Activated CD4-positive, alpha-beta T cell treated with anti-CD3 and anti-CD28 coated beads, Interleukin-2, amount 10 ng/mL, durations not matched to agents 24 days and 14 days (primary cell): ENCODE measurements at regions of chr14 and their contacts with region 1.

Region 1: GRCh38 chr14:39102969-39103957 is at the start of gene SEC23A:
- DNase-seq: peak; percentile 96
- H3K4me3 Mint-ChIP-seq: peak within 1 kb of the TSS; percentile 98
- H3K27ac Mint-ChIP-seq: peak within 1 kb of the TSS; percentile 99
- H3K4me1 Mint-ChIP-seq: peaks cover 32% of the 10 kb centered on the region
- H3K27me3 Mint-ChIP-seq: no peaks in the 10 kb centered on the region
- total RNA-seq, gene SEC23A: 63.5 and 65.8 TPM in 2 replicates

Region 2: DNA sequence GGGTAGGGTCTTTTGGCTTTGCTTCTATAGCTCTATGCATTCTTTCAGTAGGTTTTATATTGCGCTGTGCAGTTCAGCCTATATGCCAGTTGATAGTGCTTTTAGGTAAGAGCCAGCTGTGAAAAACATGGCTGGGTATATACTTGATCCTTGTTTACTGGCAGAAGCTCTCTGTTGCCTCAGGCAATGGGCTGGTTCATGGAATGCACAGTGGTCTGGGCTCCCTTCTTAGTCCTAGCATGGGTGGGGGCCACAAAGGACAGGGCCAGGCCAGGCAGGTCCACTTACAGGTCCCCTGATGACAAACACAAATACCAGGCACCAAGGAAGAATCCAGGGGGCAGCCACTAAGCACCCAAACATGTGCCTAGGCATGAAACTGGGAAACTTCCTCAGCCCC is 240.9 kb before region 1 on chr14:
- intact Hi-C with region 1: no loop called
- DNase-seq: no peak
- H3K4me3 Mint-ChIP-seq: no peak overlapping the region
- H3K27ac Mint-ChIP-seq: no peak overlapping the region
- H3K4me1 Mint-ChIP-seq: no peaks in the 10 kb centered on the region
- H3K27me3 Mint-ChIP-seq: peaks cover 2% of the 10 kb centered on the region

Region 3: DNA sequence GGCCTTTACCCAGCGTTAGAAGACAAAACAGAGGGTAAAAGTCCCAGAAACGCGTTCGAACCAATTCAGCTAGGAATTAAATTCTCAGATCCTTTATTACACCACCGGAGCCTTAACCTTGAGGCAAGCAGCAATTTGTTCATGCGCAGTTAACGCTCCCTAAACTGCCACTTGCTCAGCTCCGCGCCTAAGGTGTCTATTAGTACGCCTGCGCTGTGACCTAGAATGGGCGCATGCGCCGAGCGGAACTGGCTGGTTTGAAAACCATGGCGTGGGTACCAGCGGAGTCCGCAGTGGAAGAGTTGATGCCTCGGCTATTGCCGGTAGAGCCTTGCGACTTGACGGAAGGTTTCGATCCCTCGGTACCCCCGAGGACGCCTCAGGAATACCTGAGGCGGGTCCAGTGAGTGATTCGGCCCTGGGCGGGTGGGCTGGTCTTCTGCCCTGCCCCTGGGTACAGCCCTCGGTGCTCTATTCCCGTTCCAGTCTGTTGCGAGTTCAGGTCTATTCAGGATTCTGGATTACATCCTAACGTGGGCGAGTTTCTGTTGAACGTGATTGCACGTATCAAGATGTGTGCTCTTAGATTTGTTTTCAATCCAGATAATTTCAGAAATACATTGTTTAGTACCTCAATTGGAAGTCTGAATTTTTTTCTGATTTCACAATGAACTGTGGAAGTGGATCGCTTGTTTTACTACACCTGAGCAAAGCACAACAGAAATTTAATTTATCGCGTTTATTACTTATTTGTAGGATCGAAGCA is 11.0 kb after region 1 on chr14 and contains the start of gene GEMIN2:
- intact Hi-C with region 1: loop called (anchors 1 kb)
- DNase-seq: peak; percentile 98
- H3K4me3 Mint-ChIP-seq: peak within 1 kb of the TSS; percentile 98
- H3K27ac Mint-ChIP-seq: peak within 1 kb of the TSS; percentile 97
- H3K4me1 Mint-ChIP-seq: peaks cover 18% of the 10 kb centered on the region
- H3K27me3 Mint-ChIP-seq: no peaks in the 10 kb centered on the region
- total RNA-seq, gene GEMIN2: 23.1 and 24.9 TPM in 2 replicates

Region 4: GRCh38 chr14:39229222-39229543 is 125.9 kb after region 1 on chr14:
- intact Hi-C with region 1: loop called (anchors 2 kb)
- DNase-seq: peak; percentile 91
- H3K4me3 Mint-ChIP-seq: peak overlapping the region; percentile 54
- H3K27ac Mint-ChIP-seq: peak overlapping the region; percentile 90
- H3K4me1 Mint-ChIP-seq: peaks cover 38% of the 10 kb centered on the region
- H3K27me3 Mint-ChIP-seq: no peaks in the 10 kb centered on the region

Region 5: DNA sequence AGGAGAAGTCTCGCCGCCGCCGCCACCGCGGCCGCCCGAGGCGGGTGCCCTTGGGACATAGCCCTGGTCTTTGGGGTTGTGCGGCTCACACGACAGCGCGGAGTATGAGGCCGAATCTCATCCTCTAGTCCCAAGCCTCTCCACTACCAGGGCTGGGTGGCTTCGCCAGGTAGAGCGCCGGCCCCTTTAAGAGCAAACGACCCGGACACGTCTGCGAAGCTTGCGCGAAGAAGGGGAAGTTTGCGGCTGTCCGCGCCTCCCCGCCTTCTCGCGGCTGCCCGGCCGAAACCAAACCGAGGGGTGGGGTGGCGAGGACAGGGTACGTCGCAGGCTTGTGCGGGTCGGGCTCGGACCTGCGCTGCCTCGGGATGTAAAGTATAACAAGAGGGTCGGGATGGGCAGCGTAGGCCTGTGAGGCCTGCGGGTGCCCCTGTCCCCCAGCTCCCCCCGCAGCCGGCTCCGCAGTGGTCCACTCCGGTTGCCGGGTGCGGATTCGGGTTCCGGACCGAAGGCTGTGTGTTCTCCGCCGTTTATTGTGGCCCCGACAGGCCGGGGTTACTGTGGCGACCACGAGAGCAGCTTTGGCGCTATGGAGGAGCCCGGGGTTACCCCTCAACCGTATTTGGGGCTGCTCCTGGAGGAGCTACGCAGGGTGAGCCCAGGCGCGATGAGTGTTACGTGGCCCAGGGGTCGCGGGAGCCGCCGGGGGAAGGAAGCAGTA is 163.8 kb after region 1 on chr14:
- intact Hi-C with region 1: loop called (anchors 2 kb)
- DNase-seq: peak; percentile 94
- H3K4me3 Mint-ChIP-seq: peak overlapping the region; percentile 82
- H3K27ac Mint-ChIP-seq: peak overlapping the region; percentile 81
- H3K4me1 Mint-ChIP-seq: peaks cover 39% of the 10 kb centered on the region
- H3K27me3 Mint-ChIP-seq: no peaks in the 10 kb centered on the region

Region 6: GRCh38 chr14:39368261-39368959 is 265.1 kb after region 1 on chr14:
- intact Hi-C with region 1: loop called (anchors 1 kb)
- DNase-seq: peak; percentile 80
- H3K4me3 Mint-ChIP-seq: no peak overlapping the region
- H3K27ac Mint-ChIP-seq: no peak overlapping the region
- H3K4me1 Mint-ChIP-seq: peaks cover 2% of the 10 kb centered on the region
- H3K27me3 Mint-ChIP-seq: no peaks in the 10 kb centered on the region

Region 7: GRCh38 chr14:39773387-39774126 is 670.3 kb after region 1 on chr14:
- intact Hi-C with region 1: no loop called
- DNase-seq: no peak
- H3K4me3 Mint-ChIP-seq: no peak overlapping the region
- H3K27ac Mint-ChIP-seq: no peak overlapping the region
- H3K4me1 Mint-ChIP-seq: no peaks in the 10 kb centered on the region
- H3K27me3 Mint-ChIP-seq: no peaks in the 10 kb centered on the region